ENCODE measurements at regions of chr9 and their contacts with region 1.

Region 1: GRCh38 chr9:36407122-36407723 is 7.2 kb upstream of the RNF38 start:
- DNase-seq: peak; percentile 71
- H3K4me3 ChIP-seq: no peak overlapping the region
- H3K27ac ChIP-seq: no peak overlapping the region
- H3K4me1 ChIP-seq: no peaks in the 10 kb centered on the region
- H3K27me3 ChIP-seq: no peaks in the 10 kb centered on the region
- CTCF ChIP-seq: peak; percentile 85
- POLR2A ChIP-seq: no peak

Region 2: GRCh38 chr9:36357639-36358038 is 49.6 kb before region 1 on chr9:
- CTCF ChIA-PET with region 1: no interaction called
- POLR2A ChIA-PET with region 1: no interaction called
- dilution Hi-C with region 1: no loop called
- intact Hi-C with region 1: no loop called
- DNase-seq: no peak
- H3K4me3 ChIP-seq: no peak overlapping the region
- H3K27ac ChIP-seq: no peak overlapping the region
- H3K4me1 ChIP-seq: peaks cover under 1% of the 10 kb centered on the region
- H3K27me3 ChIP-seq: no peaks in the 10 kb centered on the region
- CTCF ChIP-seq: no peak
- POLR2A ChIP-seq: no peak

Region 3: DNA sequence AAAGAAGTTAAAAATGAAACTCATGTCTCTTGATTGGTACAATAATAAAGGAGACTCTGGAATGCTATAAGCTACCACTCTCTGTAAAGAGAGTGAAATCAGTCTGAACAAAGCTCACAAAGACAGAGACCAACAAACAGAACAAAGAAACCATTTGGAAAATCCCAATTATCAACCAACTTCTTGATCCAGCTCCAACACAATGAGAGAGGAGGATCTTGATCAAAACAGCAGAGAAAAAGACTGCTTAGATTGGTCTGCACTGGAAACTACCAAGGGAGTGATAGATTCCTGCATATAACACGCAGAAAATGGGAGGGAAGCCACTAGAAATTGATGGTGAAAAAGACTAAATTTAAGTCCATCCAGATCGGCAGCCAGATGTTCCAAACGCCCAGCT is 16.0 kb after region 1 on chr9:
- CTCF ChIA-PET with region 1: interaction called, 26 read pairs
- POLR2A ChIA-PET with region 1: no interaction called
- dilution Hi-C with region 1: no loop called
- intact Hi-C with region 1: no loop called
- DNase-seq: no peak
- H3K4me3 ChIP-seq: no peak overlapping the region
- H3K27ac ChIP-seq: no peak overlapping the region
- H3K4me1 ChIP-seq: peaks cover 19% of the 10 kb centered on the region
- H3K27me3 ChIP-seq: no peaks in the 10 kb centered on the region
- CTCF ChIP-seq: no peak
- POLR2A ChIP-seq: no peak

Region 4: DNA sequence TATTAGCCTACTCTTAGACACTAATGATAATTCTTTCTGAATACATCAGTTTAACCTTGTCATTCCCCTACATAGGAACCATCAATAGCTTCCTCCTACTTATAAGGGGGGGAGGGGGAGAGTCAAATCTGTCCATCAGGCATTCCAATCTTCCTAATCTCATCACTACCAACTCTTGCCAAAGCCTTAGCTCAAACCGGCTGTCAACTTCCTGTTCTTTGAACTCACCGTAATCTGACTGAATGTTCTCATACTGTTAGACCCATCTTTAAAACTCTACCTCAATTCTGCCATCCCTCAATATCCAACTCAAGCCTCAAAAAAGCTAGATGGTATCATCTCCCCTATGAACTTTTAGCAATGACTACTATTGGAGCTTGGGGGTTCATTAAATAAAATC is 34.7 kb after region 1 on chr9:
- CTCF ChIA-PET with region 1: interaction called, 33 read pairs
- POLR2A ChIA-PET with region 1: no interaction called
- dilution Hi-C with region 1: no loop called
- intact Hi-C with region 1: no loop called
- DNase-seq: no peak
- H3K4me3 ChIP-seq: no peak overlapping the region
- H3K27ac ChIP-seq: no peak overlapping the region
- H3K4me1 ChIP-seq: peaks cover 4% of the 10 kb centered on the region
- H3K27me3 ChIP-seq: no peaks in the 10 kb centered on the region
- CTCF ChIP-seq: no peak
- POLR2A ChIP-seq: no peak

Region 5: GRCh38 chr9:36461323-36461722 is 54.1 kb after region 1 on chr9:
- CTCF ChIA-PET with region 1: interaction called, 11 read pairs
- POLR2A ChIA-PET with region 1: interaction called, 4 read pairs
- dilution Hi-C with region 1: no loop called
- intact Hi-C with region 1: no loop called
- DNase-seq: no peak
- H3K4me3 ChIP-seq: no peak overlapping the region
- H3K27ac ChIP-seq: no peak overlapping the region
- H3K4me1 ChIP-seq: peaks cover 12% of the 10 kb centered on the region
- H3K27me3 ChIP-seq: no peaks in the 10 kb centered on the region
- CTCF ChIP-seq: no peak
- POLR2A ChIP-seq: no peak

Region 6: GRCh38 chr9:36551129-36551528 is 143.9 kb after region 1 on chr9:
- CTCF ChIA-PET with region 1: interaction called, 180 read pairs
- POLR2A ChIA-PET with region 1: no interaction called
- dilution Hi-C with region 1: no loop called
- intact Hi-C with region 1: loop called (anchors 1 kb)
- DNase-seq: no peak
- H3K4me3 ChIP-seq: no peak overlapping the region
- H3K27ac ChIP-seq: no peak overlapping the region
- H3K4me1 ChIP-seq: no peaks in the 10 kb centered on the region
- H3K27me3 ChIP-seq: peaks cover 10% of the 10 kb centered on the region in 2 experiments
- CTCF ChIP-seq: no peak
- POLR2A ChIP-seq: no peak

Region 7: DNA sequence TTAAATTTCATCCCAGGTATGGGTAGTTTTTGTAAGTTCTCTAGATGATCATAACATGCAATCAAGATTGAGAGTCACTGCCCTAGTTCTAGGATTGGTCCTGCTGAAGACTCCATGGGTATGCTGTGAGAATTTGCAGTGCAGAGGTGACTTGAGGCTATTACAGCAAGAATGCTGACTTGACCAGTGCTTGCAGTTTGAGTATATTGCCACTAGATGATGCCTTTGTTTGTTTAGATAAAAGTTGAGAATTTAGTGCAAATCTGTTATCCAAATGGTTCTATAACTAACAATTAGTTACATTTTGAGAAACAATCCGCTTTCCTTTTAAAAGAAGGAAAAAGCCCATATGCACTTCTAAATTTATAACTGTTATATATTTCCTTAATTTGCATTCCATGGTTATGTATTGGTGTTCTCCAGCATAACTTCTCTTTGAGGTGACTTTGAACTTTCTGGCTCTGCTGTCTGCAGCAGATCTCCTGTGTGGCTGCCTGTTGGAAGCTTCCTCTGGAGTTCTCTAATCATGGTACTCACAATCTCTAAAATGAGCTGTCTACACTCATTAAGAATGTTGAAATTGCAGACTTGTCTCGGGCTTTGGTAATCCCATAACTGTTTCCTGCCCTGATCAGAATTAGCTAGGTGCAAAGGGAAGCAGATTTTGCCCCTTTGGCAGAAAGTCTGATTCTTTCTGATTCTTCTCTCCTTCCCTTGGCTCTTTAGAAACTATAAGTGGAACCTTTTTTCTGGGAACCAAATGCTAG is 190.4 kb after region 1 on chr9:
- CTCF ChIA-PET with region 1: interaction called, 10 read pairs
- POLR2A ChIA-PET with region 1: no interaction called
- dilution Hi-C with region 1: no loop called
- intact Hi-C with region 1: no loop called
- DNase-seq: peak; percentile 55
- H3K4me3 ChIP-seq: no peak overlapping the region
- H3K27ac ChIP-seq: no peak overlapping the region
- H3K4me1 ChIP-seq: no peaks in the 10 kb centered on the region
- H3K27me3 ChIP-seq: no peaks in the 10 kb centered on the region
- CTCF ChIP-seq: peak; percentile 38 to 60
- POLR2A ChIP-seq: no peak

Region 8: GRCh38 chr9:36632892-36633291 is 225.7 kb after region 1 on chr9:
- CTCF ChIA-PET with region 1: interaction called, 22 read pairs
- POLR2A ChIA-PET with region 1: no interaction called
- dilution Hi-C with region 1: no loop called
- intact Hi-C with region 1: no loop called
- DNase-seq: peak; percentile 51
- H3K4me3 ChIP-seq: no peak overlapping the region
- H3K27ac ChIP-seq: no peak overlapping the region
- H3K4me1 ChIP-seq: no peaks in the 10 kb centered on the region
- H3K27me3 ChIP-seq: no peaks in the 10 kb centered on the region
- CTCF ChIP-seq: peak; percentile 39 to 43
- POLR2A ChIP-seq: no peak

Measured in endothelial cell of umbilical vein (primary cell).